Naive thymus-derived CD4-positive, alpha-beta T cell (primary cell): ENCODE measurements at regions of chr6 and their contacts with region 1.

Region 1: GRCh38 chr6:32190054-32190851 is at the start of gene PBX2:
- DNase-seq: peak; percentile 35 to 82 (median 76)
- ATAC-seq: peak; percentile 80
- H3K4me3 ChIP-seq: peak within 1 kb of the TSS; percentile 94
- H3K4me3 Mint-ChIP-seq: peak within 1 kb of the TSS; percentile 97 to 100 (median 98)
- H3K27ac ChIP-seq: peak within 1 kb of the TSS; percentile 97
- H3K27ac Mint-ChIP-seq: peak within 1 kb of the TSS; percentile 86 to 100 (median 97)
- H3K4me1 ChIP-seq: peaks cover 37 to 46% of the 10 kb centered on the region in 2 donors
- H3K4me1 Mint-ChIP-seq: peaks cover 52 to 62% (median 58%) of the 10 kb centered on the region in 7 donors
- H3K27me3 ChIP-seq: no peaks in the 10 kb centered on the region
- H3K27me3 Mint-ChIP-seq: no peaks in the 10 kb centered on the region
- total RNA-seq, gene PBX2: 105 to 221 (median 144) TPM

Region 2: DNA sequence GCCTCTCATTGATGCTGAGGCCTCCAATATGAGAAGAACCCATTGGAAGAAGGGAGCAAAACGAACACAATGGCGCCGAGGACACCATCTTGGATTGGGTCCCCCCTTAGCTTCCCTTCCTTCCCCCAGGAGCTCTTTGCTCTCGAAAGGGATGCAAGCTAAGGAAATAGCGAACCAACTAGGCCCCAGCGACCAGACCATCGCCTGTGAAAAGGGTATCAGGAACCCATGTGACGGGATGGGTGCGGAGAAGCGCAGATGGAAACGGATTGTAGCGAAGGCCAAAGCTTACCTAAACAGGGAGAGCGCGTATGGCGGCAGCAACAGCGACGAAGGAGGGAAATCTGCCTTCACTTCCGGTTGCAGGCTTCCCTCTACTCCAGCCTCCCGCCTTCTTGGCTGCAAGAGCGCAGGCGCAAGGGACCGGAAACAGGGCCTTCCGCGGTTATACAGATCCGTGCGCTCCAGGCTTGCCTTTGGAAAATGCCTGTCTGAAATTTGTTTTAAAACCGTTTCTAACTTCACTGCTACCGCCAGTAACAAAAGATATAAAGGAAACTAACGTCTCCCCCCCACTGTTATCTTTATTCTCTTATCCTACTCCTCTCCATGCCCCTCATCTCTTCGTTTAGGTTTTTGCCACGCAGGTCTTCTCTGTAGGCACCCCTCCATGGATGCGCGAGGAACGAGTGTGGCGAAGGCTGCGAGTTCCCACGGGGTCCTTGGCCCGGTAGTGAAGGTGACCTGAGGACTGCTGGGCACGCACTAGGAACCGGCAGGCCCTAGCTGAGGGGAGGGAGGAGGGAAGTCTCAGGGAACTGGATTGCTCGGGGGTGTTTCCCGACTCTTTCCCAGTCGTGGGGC is 648.4 kb before region 1 on chr6 and contains the start of gene DDX39B:
- CTCF ChIA-PET with region 1: no interaction called
- POLR2A ChIA-PET with region 1: no interaction called
- intact Hi-C with region 1: loop called (anchors 1 kb)
- DNase-seq: peak; percentile 80 to 97 (median 94)
- ATAC-seq: peak; percentile 83
- H3K4me3 ChIP-seq: peak within 1 kb of the TSS; percentile 77
- H3K4me3 Mint-ChIP-seq: peak within 1 kb of the TSS; percentile 84 to 99 (median 98)
- H3K27ac ChIP-seq: peak within 1 kb of the TSS; percentile 97
- H3K27ac Mint-ChIP-seq: peak within 1 kb of the TSS; percentile 90 to 100 (median 100)
- H3K4me1 ChIP-seq: peaks cover 34 to 45% of the 10 kb centered on the region in 2 donors
- H3K4me1 Mint-ChIP-seq: peaks cover 34 to 65% (median 55%) of the 10 kb centered on the region in 7 donors
- H3K27me3 ChIP-seq: no peaks in the 10 kb centered on the region
- H3K27me3 Mint-ChIP-seq: no peaks in the 10 kb centered on the region
- total RNA-seq, gene DDX39B: 443 to 761 (median 546) TPM

Region 3: GRCh38 chr6:31901953-31902643 is 288.2 kb before region 1 on chr6 and contains the start of gene ZBTB12:
- CTCF ChIA-PET with region 1: no interaction called
- POLR2A ChIA-PET with region 1: no interaction called
- intact Hi-C with region 1: loop called (anchors 1 to 5 kb)
- DNase-seq: peak; percentile 76 to 90 (median 84)
- ATAC-seq: peak; percentile 76
- H3K4me3 ChIP-seq: peak within 1 kb of the TSS; percentile 80
- H3K4me3 Mint-ChIP-seq: peak within 1 kb of the TSS; percentile 81 to 96 (median 88)
- H3K27ac ChIP-seq: peak within 1 kb of the TSS; percentile 83
- H3K27ac Mint-ChIP-seq: peak within 1 kb of the TSS; percentile 75 to 94 (median 86)
- H3K4me1 ChIP-seq: peaks cover 12 to 16% of the 10 kb centered on the region in 2 donors
- H3K4me1 Mint-ChIP-seq: peaks cover 18 to 34% (median 32%) of the 10 kb centered on the region in 7 donors
- H3K27me3 ChIP-seq: no peaks in the 10 kb centered on the region
- H3K27me3 Mint-ChIP-seq: peaks cover 0 to 11% (median 0%) of the 10 kb centered on the region in 5 donors
- total RNA-seq, gene ZBTB12: 0.77 to 4.5 (median 2.5) TPM

Region 4: DNA sequence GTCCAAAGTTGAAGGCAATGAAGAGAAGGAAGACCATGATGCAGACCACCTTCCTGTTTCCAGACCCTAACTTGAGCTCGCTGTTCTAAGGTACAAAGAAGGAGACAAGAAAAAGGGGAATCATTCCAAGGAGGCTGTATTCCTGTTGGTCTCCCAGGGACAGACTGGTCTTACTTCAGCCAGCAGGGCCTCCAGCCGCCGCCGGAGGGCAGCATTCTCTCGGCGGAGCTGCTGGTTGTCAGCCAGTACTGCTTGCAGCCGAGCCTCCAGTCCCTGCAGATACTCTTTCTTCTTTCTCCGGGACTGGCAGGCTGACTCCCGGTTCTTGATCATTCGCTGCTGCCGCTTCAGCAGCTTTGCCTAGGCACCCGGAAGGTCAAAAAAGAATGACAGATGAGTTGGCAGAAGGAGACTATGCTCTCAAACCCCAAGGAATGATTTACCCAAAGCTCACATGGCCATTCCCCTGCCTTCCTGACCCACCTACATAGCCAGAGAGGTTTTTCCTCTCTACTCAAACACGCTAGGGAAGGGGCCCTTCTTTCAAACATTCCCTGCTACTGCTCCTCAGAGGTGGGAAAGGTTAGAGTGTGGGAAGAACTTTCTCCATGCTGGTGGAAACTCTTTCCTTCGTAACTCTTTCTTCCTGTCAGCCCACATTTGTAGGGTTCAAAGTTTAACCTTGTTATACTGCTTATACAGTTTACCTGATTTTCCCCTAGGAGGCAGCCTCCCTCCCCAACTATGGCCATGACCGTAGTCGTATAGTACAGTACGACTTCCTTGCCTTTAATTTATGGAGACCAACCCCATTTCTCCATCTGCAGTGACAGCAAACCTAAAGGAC is 71.2 kb before region 1 on chr6:
- CTCF ChIA-PET with region 1: interaction called, 3 read pairs
- POLR2A ChIA-PET with region 1: interaction called, 6 read pairs
- intact Hi-C with region 1: loop called (anchors 1 to 2 kb)
- DNase-seq: peak; percentile 50 to 73 (median 62)
- ATAC-seq: peak; percentile 89
- H3K4me3 ChIP-seq: no peak overlapping the region
- H3K4me3 Mint-ChIP-seq: no peak overlapping the region
- H3K27ac ChIP-seq: no peak overlapping the region
- H3K27ac Mint-ChIP-seq: peak overlapping the region in 8 of 9 donors; percentile 10 to 81 (median 68)
- H3K4me1 ChIP-seq: no peaks in the 10 kb centered on the region
- H3K4me1 Mint-ChIP-seq: peaks cover 5 to 24% (median 18%) of the 10 kb centered on the region in 7 donors
- H3K27me3 ChIP-seq: no peaks in the 10 kb centered on the region
- H3K27me3 Mint-ChIP-seq: no peaks in the 10 kb centered on the region

Region 5: DNA sequence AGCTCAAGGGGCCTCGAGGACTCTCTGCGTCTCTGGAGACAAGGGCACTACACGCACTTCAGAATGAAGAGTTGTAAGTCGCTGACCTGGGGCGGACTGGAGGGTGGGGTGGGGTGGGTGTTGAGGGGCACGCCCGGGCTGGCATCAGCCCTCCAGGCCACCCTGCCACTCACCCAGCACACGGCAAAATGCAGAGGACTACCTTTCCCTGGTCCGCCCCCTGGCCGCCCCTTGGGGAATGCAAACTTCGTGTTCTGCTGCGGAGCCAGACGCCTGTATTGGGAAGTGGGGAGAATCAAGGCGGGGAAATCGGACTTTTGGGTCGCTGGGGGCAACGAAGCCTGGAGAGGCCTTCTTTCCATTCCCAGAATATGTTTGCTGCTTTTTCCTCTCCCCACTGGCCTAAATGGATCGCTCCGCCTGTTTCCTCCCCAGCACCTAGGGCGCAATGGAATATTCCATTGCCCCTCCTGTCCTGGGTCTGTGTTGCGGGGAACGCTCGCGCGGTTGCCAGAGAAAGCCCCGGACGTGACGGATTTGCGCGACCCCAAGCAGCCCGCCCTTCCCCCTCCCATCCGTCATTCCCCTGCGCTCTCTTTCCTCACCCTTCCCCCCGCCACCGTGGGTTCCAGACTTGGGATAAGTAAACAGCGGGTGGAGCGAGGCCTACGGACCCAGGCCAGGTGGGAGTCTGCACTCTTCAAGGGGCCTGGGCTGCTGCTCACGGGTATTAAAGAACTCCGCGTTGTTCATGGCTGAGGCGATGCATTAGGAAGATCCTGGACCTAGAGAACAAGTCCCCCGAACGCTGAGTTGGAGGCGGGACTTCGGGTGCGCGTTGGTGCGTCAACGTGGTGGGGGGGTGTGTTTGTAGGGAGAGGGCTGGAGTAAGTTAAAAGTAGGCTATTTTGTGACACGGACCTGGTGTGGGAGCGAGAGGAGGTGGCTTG is 36.4 kb before region 1 on chr6 and contains the start of gene PPT2:
- CTCF ChIA-PET with region 1: interaction called, 6 read pairs
- POLR2A ChIA-PET with region 1: interaction called, 9 read pairs
- intact Hi-C with region 1: loop called (anchors 1 kb)
- DNase-seq: peak; percentile 34 to 85 (median 72)
- ATAC-seq: peak; percentile 82
- H3K4me3 ChIP-seq: peak within 1 kb of the TSS; percentile 68
- H3K4me3 Mint-ChIP-seq: peak within 1 kb of the TSS; percentile 87 to 100 (median 98)
- H3K27ac ChIP-seq: peak within 1 kb of the TSS; percentile 82
- H3K27ac Mint-ChIP-seq: peak within 1 kb of the TSS; percentile 87 to 98 (median 92)
- H3K4me1 ChIP-seq: peaks cover 10 to 35% of the 10 kb centered on the region in 2 donors
- H3K4me1 Mint-ChIP-seq: peaks cover 42 to 74% (median 65%) of the 10 kb centered on the region in 7 donors
- H3K27me3 ChIP-seq: no peaks in the 10 kb centered on the region
- H3K27me3 Mint-ChIP-seq: peaks cover 0 to 34% (median 12%) of the 10 kb centered on the region in 5 donors
- total RNA-seq, gene PPT2: 11.8 to 21.9 (median 15.8) TPM

Region 6: GRCh38 chr6:32501016-32501415 is 310.8 kb after region 1 on chr6:
- CTCF ChIA-PET with region 1: no interaction called
- POLR2A ChIA-PET with region 1: no interaction called
- intact Hi-C with region 1: no loop called
- DNase-seq: no peak
- ATAC-seq: no peak
- H3K4me3 ChIP-seq: no peak overlapping the region
- H3K4me3 Mint-ChIP-seq: no peak overlapping the region
- H3K27ac ChIP-seq: no peak overlapping the region
- H3K27ac Mint-ChIP-seq: no peak overlapping the region
- H3K4me1 ChIP-seq: no peaks in the 10 kb centered on the region
- H3K4me1 Mint-ChIP-seq: peaks cover 0 to 4% (median 0%) of the 10 kb centered on the region in 7 donors
- H3K27me3 ChIP-seq: no peaks in the 10 kb centered on the region
- H3K27me3 Mint-ChIP-seq: peaks cover 0 to 26% (median 5%) of the 10 kb centered on the region in 5 donors